Breast epithelium (tissue), 4 donors: ENCODE measurements at regions of chr13 and their contacts with region 1.

Region 1: DNA sequence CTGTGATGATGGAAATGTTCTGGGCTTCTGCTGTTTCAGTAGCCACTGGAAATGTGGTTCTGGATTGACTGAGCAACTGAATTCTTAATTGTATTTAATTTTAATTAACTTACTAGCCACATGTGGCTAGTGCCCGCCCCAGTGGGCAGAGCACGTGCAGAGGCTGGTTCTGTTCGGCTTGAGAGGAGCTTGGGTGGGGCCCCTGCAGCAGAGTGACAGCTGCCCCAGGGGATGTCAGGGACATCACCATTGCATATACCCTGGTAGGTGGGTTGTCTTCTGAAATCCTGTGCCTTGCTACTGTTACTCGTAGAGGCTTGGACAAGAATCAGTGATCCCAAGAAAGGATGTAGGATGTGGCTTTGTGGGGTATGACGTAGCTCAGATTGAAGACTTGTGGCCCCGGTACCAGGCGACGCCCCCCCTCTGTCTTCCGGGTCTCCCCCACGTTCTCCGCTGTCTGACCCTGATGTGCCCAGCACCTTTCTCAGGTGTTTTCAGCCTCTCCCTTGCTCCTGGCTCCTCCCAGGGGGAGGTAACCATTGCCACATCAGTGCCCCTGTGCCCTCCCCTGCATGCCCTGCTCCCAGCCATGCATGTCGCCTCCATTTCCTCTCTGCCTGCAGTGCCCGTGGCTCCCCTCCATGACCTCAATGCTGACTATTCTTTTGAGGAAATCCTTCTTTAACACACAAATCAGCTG is 102.6 kb upstream of the RNF113B start:
- DNase-seq: no peak
- H3K4me3 ChIP-seq: no peak overlapping the region
- H3K27ac ChIP-seq: no peak overlapping the region
- H3K4me1 ChIP-seq: peaks cover 0 to 6% of the 10 kb centered on the region in 2 donors
- H3K27me3 ChIP-seq: no peaks in the 10 kb centered on the region
- CTCF ChIP-seq: no peak
- POLR2A ChIP-seq: no peak

Region 2: GRCh38 chr13:98206946-98207345 is 72.7 kb before region 1 on chr13:
- intact Hi-C with region 1: no loop called
- DNase-seq: no peak
- H3K4me3 ChIP-seq: no peak overlapping the region
- H3K27ac ChIP-seq: no peak overlapping the region
- H3K4me1 ChIP-seq: no peaks in the 10 kb centered on the region
- H3K27me3 ChIP-seq: no peaks in the 10 kb centered on the region
- CTCF ChIP-seq: no peak
- POLR2A ChIP-seq: no peak

Region 3: DNA sequence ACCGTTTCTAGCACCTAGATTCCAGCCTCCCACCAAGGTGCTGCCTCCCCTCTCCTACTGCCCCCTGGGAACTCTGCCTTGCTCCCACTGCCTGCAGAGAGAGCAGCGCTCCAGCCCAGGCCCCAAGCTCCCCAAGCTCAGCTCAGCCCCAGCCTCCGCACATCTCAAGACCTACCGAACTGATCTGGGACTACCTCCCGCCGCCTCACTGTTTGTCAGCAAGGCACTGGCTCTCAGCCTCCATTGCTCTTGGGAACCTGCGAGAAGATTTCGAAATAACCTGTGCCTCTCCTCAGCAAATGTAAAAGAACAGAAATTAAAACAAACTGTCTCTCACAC is 1120.0 kb after region 1 on chr13:
- intact Hi-C with region 1: loop called (anchors 5 kb)
- DNase-seq: no peak
- H3K4me3 ChIP-seq: no peak overlapping the region
- H3K27ac ChIP-seq: no peak overlapping the region
- H3K4me1 ChIP-seq: no peaks in the 10 kb centered on the region
- H3K27me3 ChIP-seq: no peaks in the 10 kb centered on the region
- CTCF ChIP-seq: no peak
- POLR2A ChIP-seq: no peak